WTC11 (cell line): ENCODE measurements at regions of chr3 and their contacts with region 1.

Region 1: DNA sequence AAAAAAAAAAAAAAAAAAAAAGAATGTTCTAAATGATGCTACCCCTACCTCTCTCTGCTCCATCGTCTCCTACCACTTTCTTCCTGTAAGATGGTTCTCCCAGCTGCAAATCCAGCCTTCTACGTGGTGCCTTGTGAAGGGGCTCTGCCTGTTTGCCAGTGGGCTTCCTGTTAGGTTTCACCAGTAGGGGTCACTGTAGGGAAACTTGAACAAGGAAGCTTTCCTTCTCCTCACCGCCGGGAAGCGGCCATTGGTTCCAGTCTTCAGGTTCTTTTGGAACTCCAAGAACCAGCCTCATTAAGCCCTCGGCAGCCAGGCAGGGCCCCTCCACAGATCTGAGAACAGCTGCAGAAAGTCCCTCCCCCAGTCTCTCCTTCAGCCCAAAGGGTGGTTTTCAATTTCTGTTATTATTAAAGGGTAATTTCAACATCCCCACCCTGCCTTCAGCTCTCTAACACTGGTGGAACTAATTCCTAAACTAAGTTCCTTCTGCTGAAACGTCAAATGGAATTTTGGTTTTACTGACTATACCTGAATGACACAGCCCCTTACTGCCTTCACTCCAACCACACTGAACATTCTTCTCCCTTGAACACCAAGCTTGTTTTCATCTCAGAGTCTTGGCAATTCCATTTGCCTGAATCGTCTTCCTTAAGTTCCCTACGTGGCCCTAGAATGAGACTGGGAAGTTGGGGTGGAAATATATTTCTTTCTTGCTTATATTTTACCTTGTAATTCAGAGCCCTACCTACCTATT is 13.5 kb downstream of the MCCC1 start:
- DNase-seq: peak; percentile 73
- ATAC-seq: peak; percentile 93
- H3K4me3 Mint-ChIP-seq: no peak overlapping the region
- H3K27ac Mint-ChIP-seq: peak overlapping the region; percentile 90
- H3K4me1 Mint-ChIP-seq: 0 out of 2 replicates have a peak, but pooled peaks cover 8% of the 10 kb centered on the region
- H3K27me3 Mint-ChIP-seq: no peaks in the 10 kb centered on the region
- CTCF ChIP-seq: peak; percentile 70

Region 2: GRCh38 chr3:183099026-183099837 is 13.4 kb after region 1 on chr3 and contains the start of gene MCCC1:
- CTCF ChIA-PET with region 1: interaction called, 45 read pairs
- POLR2A ChIA-PET with region 1: interaction called, 3 read pairs
- DNase-seq: peak; percentile 98
- ATAC-seq: peak; percentile 99
- H3K4me3 Mint-ChIP-seq: peak within 1 kb of the TSS; percentile 96
- H3K27ac Mint-ChIP-seq: peak within 1 kb of the TSS; percentile 97
- H3K4me1 Mint-ChIP-seq: peaks cover 18% of the 10 kb centered on the region
- H3K27me3 Mint-ChIP-seq: no peaks in the 10 kb centered on the region
- CTCF ChIP-seq: no peak
- total RNA-seq, gene MCCC1: 19.5 to 21.9 TPM (median 19.9 TPM) in 3 replicates

Region 3: DNA sequence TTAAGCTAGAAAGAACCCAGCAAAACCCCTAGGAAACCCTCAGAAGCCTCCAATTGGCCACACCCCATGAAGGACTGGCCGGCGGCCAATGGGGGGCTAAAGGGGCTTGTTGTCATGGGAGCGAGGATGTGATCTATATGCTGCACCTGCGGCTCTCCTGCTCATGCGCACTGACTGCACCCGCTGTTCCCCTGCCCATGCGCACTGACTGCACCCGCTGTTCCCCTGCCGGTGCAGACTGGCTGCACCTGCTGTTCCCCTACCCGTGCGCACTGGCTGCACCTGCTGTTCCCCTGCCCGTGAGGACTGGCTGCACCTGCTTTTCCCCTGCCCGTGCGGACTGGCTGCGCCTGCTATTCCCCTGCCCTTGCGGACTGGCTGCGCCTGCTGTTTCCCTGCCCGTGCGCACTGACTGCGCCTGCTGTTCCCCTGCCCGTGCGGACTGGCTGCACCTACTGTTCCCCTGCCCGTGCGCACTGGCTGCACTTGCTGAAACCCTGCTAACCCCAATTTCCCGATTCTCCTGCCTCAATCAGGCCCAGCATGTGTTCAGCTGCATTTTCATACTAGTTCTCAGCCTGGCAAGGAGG is 30.3 kb after region 1 on chr3:
- CTCF ChIA-PET with region 1: interaction called, 36 read pairs
- POLR2A ChIA-PET with region 1: no interaction called
- DNase-seq: peak; percentile 94
- ATAC-seq: peak; percentile 94
- H3K4me3 Mint-ChIP-seq: peak overlapping the region; percentile 81
- H3K27ac Mint-ChIP-seq: peak overlapping the region; percentile 42; the same call in 1 of the 2 replicates
- H3K4me1 Mint-ChIP-seq: peaks cover 26% of the 10 kb centered on the region
- H3K27me3 Mint-ChIP-seq: peaks cover 26% of the 10 kb centered on the region
- CTCF ChIP-seq: no peak